Heart right ventricle (tissue), 16 donors: ENCODE measurements at regions of chr9 and their contacts with region 1.

Region 1: GRCh38 chr9:7957803-7958202 is 158.2 kb upstream of the DMAC1 start:
- DNase-seq: no peak
- ATAC-seq: no peak
- H3K4me3 ChIP-seq: no peak overlapping the region
- H3K27ac ChIP-seq: no peak overlapping the region
- H3K4me1 ChIP-seq: peaks cover 0 to 3% (median 0%) of the 10 kb centered on the region in 9 donors
- H3K27me3 ChIP-seq: no peaks in the 10 kb centered on the region
- CTCF ChIP-seq: no peak

Region 2: GRCh38 chr9:7216004-7216831 is 741.6 kb before region 1 on chr9:
- intact Hi-C with region 1: loop called in 1 of 10 experiments (anchors 10 kb)
- DNase-seq: no peak
- ATAC-seq: no peak
- H3K4me3 ChIP-seq: no peak overlapping the region
- H3K27ac ChIP-seq: no peak overlapping the region
- H3K4me1 ChIP-seq: no peaks in the 10 kb centered on the region
- H3K27me3 ChIP-seq: peaks cover 0 to 4% (median 0%) of the 10 kb centered on the region in 7 donors
- CTCF ChIP-seq: no peak

Region 3: DNA sequence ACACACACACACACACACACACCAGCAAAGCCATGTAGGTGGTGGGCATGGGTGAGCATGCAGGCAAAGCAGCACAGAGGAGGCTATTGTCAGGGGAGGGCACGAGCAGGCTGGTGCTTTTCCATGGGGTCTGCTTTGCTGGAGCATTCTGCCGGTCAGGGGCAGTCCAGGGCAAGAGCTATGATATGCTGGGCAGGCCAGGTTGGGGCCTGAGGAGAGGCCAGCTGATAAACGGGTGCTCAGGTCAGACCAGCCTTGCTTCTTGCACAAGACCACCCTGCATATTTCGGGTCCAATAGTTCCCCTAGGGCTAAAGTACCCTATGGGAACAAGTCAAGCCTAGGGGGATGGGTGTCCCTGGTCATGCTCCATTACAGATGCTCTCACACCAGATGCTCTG is 95.7 kb after region 1 on chr9:
- intact Hi-C with region 1: no loop called
- DNase-seq: no peak
- ATAC-seq: no peak
- H3K4me3 ChIP-seq: no peak overlapping the region
- H3K27ac ChIP-seq: no peak overlapping the region
- H3K4me1 ChIP-seq: no peaks in the 10 kb centered on the region
- H3K27me3 ChIP-seq: no peaks in the 10 kb centered on the region
- CTCF ChIP-seq: no peak